ENCODE measurements at regions of chr1 and their contacts with region 1.

Region 1: DNA sequence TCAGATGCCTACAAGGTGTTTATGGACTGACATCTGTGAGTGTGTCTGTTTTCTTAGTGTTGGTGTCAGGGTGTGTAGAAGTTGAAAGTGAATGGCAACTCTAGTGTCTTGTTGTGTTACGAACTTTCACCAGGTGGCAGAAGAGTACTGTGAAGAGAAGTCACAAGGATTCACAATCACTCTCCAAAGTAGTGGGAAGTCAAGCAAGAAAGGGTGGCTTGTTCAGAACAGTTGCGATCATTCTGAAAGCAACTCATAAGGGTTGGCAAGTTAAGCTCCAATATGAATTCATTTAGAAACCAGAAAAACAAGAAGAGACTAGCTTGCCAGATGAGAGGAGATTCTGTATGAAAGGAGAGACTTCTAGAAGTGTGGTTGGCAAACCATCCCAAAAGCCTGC is 86.1 kb downstream of the FASLG start:
- DNase-seq: no peak
- H3K4me3 ChIP-seq: no peak overlapping the region
- H3K27ac ChIP-seq: no peak overlapping the region
- H3K4me1 ChIP-seq: no peaks in the 10 kb centered on the region
- H3K27me3 ChIP-seq: no peaks in the 10 kb centered on the region
- CTCF ChIP-seq: peak in 2 of 3 experiments; percentile 67 to 75; a peak in 3 of 4 replicates
- EP300 ChIP-seq: no peak
- POLR2A ChIP-seq: no peak
- RAD21 ChIP-seq: peak; percentile 94 to 96

Region 2: GRCh38 chr1:172727956-172728603 is 16.9 kb before region 1 on chr1:
- CTCF ChIA-PET with region 1: interaction called, 38 read pairs
- POLR2A ChIA-PET with region 1: no interaction called
- DNase-seq: peak in 1 of 2 experiments; percentile 62
- H3K4me3 ChIP-seq: no peak overlapping the region
- H3K27ac ChIP-seq: no peak overlapping the region
- H3K4me1 ChIP-seq: no peaks in the 10 kb centered on the region
- H3K27me3 ChIP-seq: no peaks in the 10 kb centered on the region
- CTCF ChIP-seq: peak; percentile 89 to 100 (median 99)
- EP300 ChIP-seq: no peak
- POLR2A ChIP-seq: no peak
- RAD21 ChIP-seq: peak; percentile 84

Region 3: GRCh38 chr1:172775616-172776015 is 30.6 kb after region 1 on chr1:
- CTCF ChIA-PET with region 1: interaction called, 10 read pairs
- POLR2A ChIA-PET with region 1: no interaction called
- DNase-seq: no peak
- H3K4me3 ChIP-seq: no peak overlapping the region
- H3K27ac ChIP-seq: no peak overlapping the region
- H3K4me1 ChIP-seq: no peaks in the 10 kb centered on the region; a peak in 1 of 7 replicates
- H3K27me3 ChIP-seq: peaks cover 0 to 1% (median 0%) of the 10 kb centered on the region in 4 experiments; a peak in 1 of 7 replicates
- CTCF ChIP-seq: no peak
- EP300 ChIP-seq: no peak
- POLR2A ChIP-seq: no peak
- RAD21 ChIP-seq: no peak

Region 4: GRCh38 chr1:172826096-172826743 is 81.2 kb after region 1 on chr1:
- CTCF ChIA-PET with region 1: interaction called, 21 read pairs
- POLR2A ChIA-PET with region 1: no interaction called
- DNase-seq: no peak
- H3K4me3 ChIP-seq: no peak overlapping the region
- H3K27ac ChIP-seq: no peak overlapping the region
- H3K4me1 ChIP-seq: peaks cover 0 to 2% (median 0%) of the 10 kb centered on the region in 4 experiments; a peak in 1 of 7 replicates
- H3K27me3 ChIP-seq: no peaks in the 10 kb centered on the region
- CTCF ChIP-seq: peak in 2 of 3 experiments; percentile 53 to 58; a peak in 2 of 4 replicates
- EP300 ChIP-seq: no peak
- POLR2A ChIP-seq: no peak
- RAD21 ChIP-seq: peak; percentile 85 to 88

Region 5: DNA sequence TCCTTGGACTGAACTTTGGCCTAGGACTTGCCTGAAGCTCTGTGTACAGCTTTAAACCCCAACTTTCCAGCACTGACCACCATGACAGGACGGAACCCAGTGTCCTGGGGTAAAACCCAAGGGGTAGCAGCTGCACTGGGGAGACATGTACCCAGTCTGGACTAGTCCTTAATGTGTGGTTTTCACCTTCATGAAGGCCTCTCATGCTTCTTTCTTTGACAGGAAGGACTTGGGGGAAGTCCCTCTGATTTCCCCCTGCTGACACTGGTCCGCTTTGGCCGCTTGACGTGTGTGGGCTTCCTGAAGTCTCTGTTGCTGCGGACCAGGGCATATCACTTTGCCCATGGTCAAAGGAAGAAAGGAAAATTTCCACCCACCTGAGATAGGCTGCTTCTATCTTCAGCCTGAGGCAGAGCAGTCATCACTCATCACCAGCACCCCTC is 665.8 kb after region 1 on chr1:
- CTCF ChIA-PET with region 1: interaction called, 12 read pairs
- POLR2A ChIA-PET with region 1: no interaction called
- DNase-seq: no peak
- H3K4me3 ChIP-seq: no peak overlapping the region
- H3K27ac ChIP-seq: no peak overlapping the region
- H3K4me1 ChIP-seq: no peaks in the 10 kb centered on the region; a peak in 3 of 7 replicates
- H3K27me3 ChIP-seq: no peaks in the 10 kb centered on the region
- CTCF ChIP-seq: no peak
- EP300 ChIP-seq: no peak
- POLR2A ChIP-seq: no peak
- RAD21 ChIP-seq: no peak